CD4-positive, alpha-beta memory T cell (primary cell): ENCODE measurements at regions of chr4 and their contacts with region 1.

Region 1: DNA sequence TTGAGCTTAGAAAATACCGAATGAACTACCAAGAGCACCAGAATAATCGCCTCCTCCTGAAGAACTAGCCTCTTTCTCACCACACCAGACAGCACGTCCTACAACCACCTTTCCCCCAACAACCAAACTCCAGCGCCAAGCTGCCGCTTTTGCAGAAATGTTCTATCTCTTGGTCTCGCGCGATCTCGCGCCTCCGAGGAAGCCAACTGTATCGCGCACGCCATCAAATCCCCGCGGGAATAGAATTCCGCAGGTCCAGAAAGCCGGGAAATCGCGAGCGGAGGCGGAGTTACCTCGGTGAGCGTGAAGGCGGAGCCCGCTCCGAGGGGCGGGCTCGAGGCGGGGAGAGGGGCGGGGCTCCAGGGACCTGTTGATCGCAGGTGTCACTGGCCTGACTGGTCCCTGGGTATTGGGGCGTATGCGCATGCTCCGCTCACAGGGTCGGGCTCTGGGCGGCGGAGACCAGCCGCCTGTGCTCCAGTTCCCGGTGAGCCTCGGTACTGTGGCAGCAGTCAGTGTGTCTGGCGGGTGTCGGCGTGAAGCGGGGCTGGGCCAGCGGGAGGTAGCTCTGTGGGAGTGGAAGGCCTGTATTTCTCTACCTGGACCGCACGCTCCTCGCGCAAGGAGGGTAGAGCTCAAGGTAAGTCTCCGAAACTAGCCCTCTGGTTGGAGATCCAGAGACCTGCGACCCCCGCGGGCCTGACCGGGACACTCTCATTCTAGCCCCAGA is at the start of gene USP53:
- DNase-seq: peak; percentile 95 to 98 (median 98)
- H3K4me3 ChIP-seq: peak within 1 kb of the TSS; percentile 98 to 99
- H3K4me3 Mint-ChIP-seq: peak within 1 kb of the TSS; percentile 93 to 99 (median 96)
- H3K27ac ChIP-seq: peak within 1 kb of the TSS; percentile 75
- H3K27ac Mint-ChIP-seq: peak within 1 kb of the TSS; percentile 87 to 99 (median 97)
- H3K4me1 ChIP-seq: peaks cover 25% of the 10 kb centered on the region
- H3K4me1 Mint-ChIP-seq: peaks cover 19 to 37% (median 28%) of the 10 kb centered on the region in 4 donors
- H3K27me3 ChIP-seq: no peaks in the 10 kb centered on the region
- H3K27me3 Mint-ChIP-seq: no peaks in the 10 kb centered on the region
- total RNA-seq, gene USP53: 27.9 to 28.9 TPM

Region 2: DNA sequence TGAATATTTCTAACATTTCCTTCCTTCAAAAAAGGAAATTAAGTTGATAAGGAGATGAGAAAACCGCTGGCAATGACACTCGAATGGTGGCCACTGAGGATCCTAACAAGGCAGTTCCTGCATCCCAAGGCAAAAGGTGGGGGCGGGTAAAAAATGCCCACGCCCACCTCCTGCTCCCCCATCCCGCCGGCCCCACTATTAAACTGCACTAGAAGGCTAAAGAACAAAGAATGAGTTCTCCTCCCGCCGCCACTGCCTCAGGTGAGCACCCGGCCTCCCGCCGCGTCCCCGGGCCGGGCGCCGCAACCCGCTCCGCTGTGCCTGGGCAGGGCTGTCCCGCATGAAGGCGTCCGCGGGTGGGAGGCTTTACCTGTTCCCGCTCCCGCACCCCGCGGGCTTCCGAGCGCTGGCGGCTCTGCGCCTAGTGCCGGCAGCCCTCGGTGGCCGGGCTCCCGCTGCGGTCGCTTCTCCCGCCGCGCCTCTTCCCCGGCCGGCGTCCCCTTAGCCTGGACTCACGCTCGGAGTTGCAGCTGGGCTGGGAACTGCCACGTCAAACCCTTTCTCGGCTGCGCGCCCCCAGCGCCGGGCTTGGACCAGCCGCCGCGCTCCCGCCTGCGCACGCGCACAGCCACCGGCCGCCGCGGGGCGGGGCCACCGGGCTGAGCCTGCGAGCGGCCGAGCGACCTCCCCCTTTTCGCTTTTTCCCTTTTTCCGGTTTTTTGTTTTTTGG is 376.7 kb before region 1 on chr4 and contains the start of gene SEC24D:
- CTCF ChIA-PET with region 1: no interaction called
- POLR2A ChIA-PET with region 1: interaction called, 5 read pairs
- intact Hi-C with region 1: loop called (anchors 5 kb)
- DNase-seq: peak; percentile 79 to 86 (median 84)
- H3K4me3 ChIP-seq: peak within 1 kb of the TSS; percentile 71 to 84
- H3K4me3 Mint-ChIP-seq: peak within 1 kb of the TSS; percentile 99 to 100 (median 100)
- H3K27ac ChIP-seq: peak within 1 kb of the TSS; percentile 77
- H3K27ac Mint-ChIP-seq: peak within 1 kb of the TSS; percentile 95 to 100 (median 99)
- H3K4me1 ChIP-seq: peaks cover 23% of the 10 kb centered on the region
- H3K4me1 Mint-ChIP-seq: peaks cover 20 to 36% (median 30%) of the 10 kb centered on the region in 4 donors
- H3K27me3 ChIP-seq: no peaks in the 10 kb centered on the region
- H3K27me3 Mint-ChIP-seq: no peaks in the 10 kb centered on the region
- total RNA-seq, gene SEC24D: 34.5 to 36.8 TPM

Region 3: DNA sequence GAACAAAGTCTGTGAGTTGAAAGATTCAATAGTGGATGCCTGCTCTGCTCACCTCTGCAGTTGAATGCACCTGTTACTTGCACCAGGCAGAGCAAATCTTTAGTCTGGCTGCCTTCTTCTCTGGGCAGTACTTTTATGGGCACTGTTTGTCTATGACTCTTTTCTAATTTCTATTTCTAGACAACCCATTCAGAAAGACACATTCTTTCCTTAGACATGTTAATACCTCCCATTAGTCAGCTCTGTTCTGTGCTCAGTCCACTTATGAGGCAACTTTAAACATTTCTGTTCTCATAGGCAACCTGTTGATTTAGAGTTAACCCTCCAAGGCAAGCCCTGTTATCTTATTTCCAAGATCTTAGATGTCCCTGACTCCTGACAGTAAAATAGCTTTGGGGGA is 214.8 kb before region 1 on chr4:
- CTCF ChIA-PET with region 1: no interaction called
- POLR2A ChIA-PET with region 1: no interaction called
- intact Hi-C with region 1: no loop called
- DNase-seq: no peak
- H3K4me3 ChIP-seq: no peak overlapping the region
- H3K4me3 Mint-ChIP-seq: no peak overlapping the region
- H3K27ac ChIP-seq: no peak overlapping the region
- H3K27ac Mint-ChIP-seq: no peak overlapping the region
- H3K4me1 ChIP-seq: no peaks in the 10 kb centered on the region
- H3K4me1 Mint-ChIP-seq: no peaks in the 10 kb centered on the region
- H3K27me3 ChIP-seq: no peaks in the 10 kb centered on the region
- H3K27me3 Mint-ChIP-seq: peaks cover 1 to 2% of the 10 kb centered on the region in 2 donors

Region 4: DNA sequence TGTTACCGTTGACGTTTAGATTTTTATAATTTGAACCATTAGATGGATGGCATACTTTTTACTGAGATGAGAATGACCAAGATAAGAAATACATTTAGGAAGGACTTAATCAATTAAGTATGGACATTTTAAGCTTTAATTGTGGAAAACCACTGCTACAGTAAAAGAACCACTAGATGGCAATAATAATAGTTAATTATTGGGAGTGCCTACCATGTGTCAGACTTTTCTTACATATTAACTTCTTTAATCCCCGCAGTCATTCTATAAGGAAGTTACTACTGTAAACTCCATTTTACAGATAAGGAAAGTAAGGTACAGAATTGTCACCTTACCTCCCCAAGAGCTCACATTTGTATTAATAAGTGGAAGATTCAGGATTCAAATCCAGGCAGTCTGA is 125.3 kb before region 1 on chr4:
- CTCF ChIA-PET with region 1: interaction called, 10 read pairs
- POLR2A ChIA-PET with region 1: interaction called, 11 read pairs
- intact Hi-C with region 1: loop called (anchors 2 kb)
- DNase-seq: no peak
- H3K4me3 ChIP-seq: no peak overlapping the region
- H3K4me3 Mint-ChIP-seq: no peak overlapping the region
- H3K27ac ChIP-seq: no peak overlapping the region
- H3K27ac Mint-ChIP-seq: no peak overlapping the region
- H3K4me1 ChIP-seq: no peaks in the 10 kb centered on the region
- H3K4me1 Mint-ChIP-seq: peaks cover 0 to 1% (median 0%) of the 10 kb centered on the region in 4 donors
- H3K27me3 ChIP-seq: no peaks in the 10 kb centered on the region
- H3K27me3 Mint-ChIP-seq: peaks cover 2 to 3% of the 10 kb centered on the region in 2 donors

Region 5: DNA sequence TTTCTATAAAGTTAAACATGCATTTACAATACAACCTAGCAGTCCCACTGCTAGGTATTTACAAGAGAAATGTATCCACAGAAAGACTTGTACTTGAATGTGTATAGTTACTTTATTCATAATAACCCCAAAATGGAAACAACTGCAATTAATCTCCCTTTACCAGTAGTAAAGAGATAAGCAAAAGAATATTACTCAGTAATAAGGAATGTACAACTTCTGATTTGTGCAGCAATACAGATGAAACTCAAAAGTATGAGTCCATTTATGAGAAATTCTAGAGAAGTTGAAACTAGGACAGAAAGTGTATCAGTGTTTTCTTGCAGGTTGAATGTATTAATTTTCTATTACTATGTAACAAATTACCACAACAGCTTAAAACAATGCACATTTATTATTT is 15.3 kb after region 1 on chr4:
- CTCF ChIA-PET with region 1: interaction called, 3 read pairs
- POLR2A ChIA-PET with region 1: interaction called, 15 read pairs
- intact Hi-C with region 1: no loop called
- DNase-seq: no peak
- H3K4me3 ChIP-seq: no peak overlapping the region
- H3K4me3 Mint-ChIP-seq: no peak overlapping the region
- H3K27ac ChIP-seq: no peak overlapping the region
- H3K27ac Mint-ChIP-seq: no peak overlapping the region
- H3K4me1 ChIP-seq: peaks cover 2% of the 10 kb centered on the region
- H3K4me1 Mint-ChIP-seq: peaks cover 18 to 42% (median 33%) of the 10 kb centered on the region in 4 donors
- H3K27me3 ChIP-seq: no peaks in the 10 kb centered on the region
- H3K27me3 Mint-ChIP-seq: no peaks in the 10 kb centered on the region

Region 6: GRCh38 chr4:119300101-119300978 is 87.9 kb after region 1 on chr4:
- CTCF ChIA-PET with region 1: interaction called, 14 read pairs
- POLR2A ChIA-PET with region 1: interaction called, 59 read pairs
- intact Hi-C with region 1: loop called (anchors 1 kb)
- DNase-seq: peak; percentile 88 to 91 (median 90)
- H3K4me3 ChIP-seq: peak overlapping the region; percentile 95 to 99
- H3K4me3 Mint-ChIP-seq: peak overlapping the region; percentile 95 to 100 (median 98)
- H3K27ac ChIP-seq: peak overlapping the region; percentile 92
- H3K27ac Mint-ChIP-seq: peak overlapping the region; percentile 96 to 100 (median 99)
- H3K4me1 ChIP-seq: peaks cover 27% of the 10 kb centered on the region
- H3K4me1 Mint-ChIP-seq: peaks cover 24 to 42% (median 34%) of the 10 kb centered on the region in 4 donors
- H3K27me3 ChIP-seq: no peaks in the 10 kb centered on the region
- H3K27me3 Mint-ChIP-seq: no peaks in the 10 kb centered on the region

Region 7: GRCh38 chr4:119490335-119490734 is 277.9 kb after region 1 on chr4:
- CTCF ChIA-PET with region 1: no interaction called
- POLR2A ChIA-PET with region 1: no interaction called
- intact Hi-C with region 1: no loop called
- DNase-seq: no peak
- H3K4me3 ChIP-seq: no peak overlapping the region
- H3K4me3 Mint-ChIP-seq: no peak overlapping the region
- H3K27ac ChIP-seq: no peak overlapping the region
- H3K27ac Mint-ChIP-seq: no peak overlapping the region
- H3K4me1 ChIP-seq: no peaks in the 10 kb centered on the region
- H3K4me1 Mint-ChIP-seq: no peaks in the 10 kb centered on the region
- H3K27me3 ChIP-seq: no peaks in the 10 kb centered on the region
- H3K27me3 Mint-ChIP-seq: no peaks in the 10 kb centered on the region

Region 8: DNA sequence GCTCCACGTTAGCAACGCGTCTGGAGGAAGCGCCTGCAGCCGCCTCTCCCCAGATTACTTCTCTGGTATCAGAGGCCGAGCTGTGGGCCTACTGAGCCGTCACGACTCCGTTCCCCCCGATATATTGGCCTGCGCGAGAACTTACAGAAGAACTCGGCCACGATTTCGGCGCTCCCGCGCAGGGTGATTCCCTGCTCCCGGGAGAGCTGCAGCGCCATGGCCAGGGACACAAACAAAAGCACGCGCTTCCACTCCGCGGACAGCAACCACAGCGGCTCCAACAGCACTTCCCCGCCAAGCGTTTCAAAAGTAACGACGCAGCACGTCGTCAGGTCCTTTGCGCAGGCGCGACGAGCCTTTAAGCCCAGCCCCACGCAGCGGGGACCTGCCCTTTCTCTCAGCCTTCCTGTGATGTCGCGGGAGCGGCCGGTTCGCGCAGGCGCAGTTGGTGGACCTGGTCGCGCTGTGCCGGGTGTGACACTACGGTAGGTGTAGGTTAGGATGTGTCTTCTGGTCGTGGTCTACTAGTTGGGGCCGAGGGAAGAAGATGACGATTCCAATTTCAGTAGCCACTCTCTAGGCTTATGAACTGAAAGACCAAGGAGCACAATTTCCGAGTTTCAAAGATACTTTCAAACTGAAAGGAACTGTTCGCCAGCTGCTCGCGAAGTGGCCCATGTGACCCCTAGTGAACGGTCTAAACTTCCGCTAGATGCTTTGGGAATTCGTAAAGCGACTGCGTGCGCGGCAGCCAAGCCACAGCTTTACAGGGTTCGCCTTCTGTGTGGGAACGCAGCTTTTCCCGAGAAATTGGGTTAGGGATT is 854.3 kb after region 1 on chr4 and contains the start of gene MAD2L1:
- CTCF ChIA-PET with region 1: no interaction called
- POLR2A ChIA-PET with region 1: no interaction called
- intact Hi-C with region 1: loop called (anchors 1 kb)
- DNase-seq: peak; percentile 98 to 99 (median 99)
- H3K4me3 ChIP-seq: peak within 1 kb of the TSS; percentile 83 to 94
- H3K4me3 Mint-ChIP-seq: peak within 1 kb of the TSS; percentile 89 to 99 (median 96)
- H3K27ac ChIP-seq: peak within 1 kb of the TSS; percentile 98
- H3K27ac Mint-ChIP-seq: peak within 1 kb of the TSS; percentile 96 to 99 (median 99)
- H3K4me1 ChIP-seq: peaks cover 55% of the 10 kb centered on the region
- H3K4me1 Mint-ChIP-seq: peaks cover 39 to 75% (median 52%) of the 10 kb centered on the region in 4 donors
- H3K27me3 ChIP-seq: no peaks in the 10 kb centered on the region
- H3K27me3 Mint-ChIP-seq: no peaks in the 10 kb centered on the region
- total RNA-seq, gene MAD2L1: 8.0 to 9.9 TPM